ENCODE measurements at regions of chr19 and their contacts with region 1.

Region 1: DNA sequence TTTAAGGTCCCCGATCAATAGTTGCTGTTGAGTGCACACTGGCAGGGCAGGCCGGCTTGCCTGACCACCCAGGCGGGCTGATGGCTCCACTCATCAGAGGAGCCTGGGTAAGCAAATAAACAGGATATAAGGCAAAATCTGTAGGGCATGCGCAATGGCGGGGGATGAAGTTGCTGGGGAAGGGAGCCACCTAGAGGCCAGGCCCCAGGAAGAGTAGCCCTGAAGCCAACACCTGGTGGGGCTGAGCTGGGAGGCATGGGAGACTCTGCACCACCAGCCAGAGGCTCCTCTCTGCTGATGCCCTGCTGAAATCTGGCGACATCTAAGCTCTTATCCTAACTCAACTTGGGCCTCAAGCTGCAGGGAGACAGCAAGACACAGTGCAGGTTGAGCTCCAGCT is 324.3 kb downstream of the ZNF536 start:
- DNase-seq: peak; percentile 82
- ATAC-seq: peak; percentile 93
- H3K4me3 Mint-ChIP-seq: peak overlapping the region; percentile 20; the same call in 1 of the 2 replicates
- H3K27ac Mint-ChIP-seq: no peak overlapping the region; the same call in 1 of the 2 replicates
- H3K4me1 Mint-ChIP-seq: peaks cover 46% of the 10 kb centered on the region
- H3K27me3 Mint-ChIP-seq: no peaks in the 10 kb centered on the region
- CTCF ChIP-seq: no peak

Region 2: GRCh38 chr19:30325676-30326392 is 370.7 kb before region 1 on chr19:
- CTCF ChIA-PET with region 1: no interaction called
- POLR2A ChIA-PET with region 1: no interaction called
- DNase-seq: no peak
- ATAC-seq: no peak
- H3K4me3 Mint-ChIP-seq: no peak overlapping the region
- H3K27ac Mint-ChIP-seq: no peak overlapping the region
- H3K4me1 Mint-ChIP-seq: peaks cover 3% of the 10 kb centered on the region
- H3K27me3 Mint-ChIP-seq: no peaks in the 10 kb centered on the region
- CTCF ChIP-seq: no peak

Region 3: DNA sequence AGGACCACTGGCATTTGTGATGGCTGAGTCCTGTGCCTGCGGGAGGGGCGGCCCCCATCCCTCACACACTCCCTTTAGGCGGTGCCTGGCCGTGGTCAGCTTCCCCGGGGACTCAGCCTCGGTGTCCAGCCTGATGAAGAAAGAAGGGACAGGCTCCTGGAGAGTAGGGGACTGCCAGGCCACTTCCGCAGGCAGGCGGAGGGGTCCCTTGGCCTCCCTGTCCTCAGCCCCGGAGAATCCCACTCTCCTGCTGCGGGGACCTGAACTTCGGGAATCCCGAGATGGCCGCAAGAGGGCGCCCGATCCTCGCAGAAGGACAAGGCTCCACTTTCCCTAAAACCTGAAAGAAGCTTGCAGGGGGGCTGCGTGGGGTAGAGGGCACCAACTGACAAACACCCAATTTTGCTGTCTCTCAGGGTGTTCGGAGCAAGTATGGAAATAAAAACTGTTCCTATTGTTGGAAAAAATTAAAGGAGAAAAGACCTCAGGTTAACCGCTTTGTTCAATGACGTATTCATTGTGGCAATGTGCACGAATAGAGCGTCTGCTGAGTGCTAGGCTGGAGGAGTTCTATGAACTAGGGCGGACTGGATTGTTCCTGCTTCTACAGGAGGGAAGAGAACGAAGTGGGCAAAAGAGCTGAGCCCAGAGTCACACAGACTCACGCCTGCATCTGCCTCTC is 27.0 kb before region 1 on chr19:
- CTCF ChIA-PET with region 1: interaction called, 12 read pairs
- POLR2A ChIA-PET with region 1: no interaction called
- DNase-seq: peak; percentile 86
- ATAC-seq: peak; percentile 55
- H3K4me3 Mint-ChIP-seq: peak overlapping the region; percentile 52
- H3K27ac Mint-ChIP-seq: no peak overlapping the region
- H3K4me1 Mint-ChIP-seq: peaks cover 14% of the 10 kb centered on the region
- H3K27me3 Mint-ChIP-seq: no peaks in the 10 kb centered on the region; the same call in 1 of the 2 replicates
- CTCF ChIP-seq: peak; percentile 77

Region 4: DNA sequence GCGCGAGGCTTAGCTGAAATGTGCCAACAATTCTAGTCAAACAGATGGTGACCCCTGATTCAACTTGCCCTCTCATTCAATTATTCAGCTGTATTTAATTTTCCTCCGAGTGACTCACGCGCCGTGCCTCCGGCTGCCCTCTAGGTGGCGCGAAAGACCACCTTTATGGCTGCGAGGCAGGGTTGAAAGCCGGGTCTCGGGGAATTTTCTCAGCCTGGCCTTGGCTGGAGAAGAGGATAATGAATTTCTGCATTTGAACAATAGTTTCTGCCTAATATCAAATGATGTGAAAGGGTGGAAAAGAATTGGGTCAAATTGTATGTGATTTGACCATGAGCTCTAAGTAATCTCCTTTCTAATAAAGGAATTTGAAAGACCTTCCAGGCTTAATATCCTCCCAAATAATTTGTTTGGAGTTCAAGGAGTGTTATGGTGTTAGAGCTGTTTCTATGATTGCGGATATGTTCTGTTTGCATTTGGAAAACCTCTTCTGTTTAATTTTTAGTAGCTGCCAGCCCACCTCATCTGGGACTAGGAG is 13.4 kb before region 1 on chr19:
- CTCF ChIA-PET with region 1: interaction called, 77 read pairs
- POLR2A ChIA-PET with region 1: no interaction called
- DNase-seq: peak; percentile 78
- ATAC-seq: peak; percentile 58
- H3K4me3 Mint-ChIP-seq: no peak overlapping the region
- H3K27ac Mint-ChIP-seq: no peak overlapping the region
- H3K4me1 Mint-ChIP-seq: peaks cover 35% of the 10 kb centered on the region
- H3K27me3 Mint-ChIP-seq: no peaks in the 10 kb centered on the region
- CTCF ChIP-seq: peak; percentile 80

Region 5: DNA sequence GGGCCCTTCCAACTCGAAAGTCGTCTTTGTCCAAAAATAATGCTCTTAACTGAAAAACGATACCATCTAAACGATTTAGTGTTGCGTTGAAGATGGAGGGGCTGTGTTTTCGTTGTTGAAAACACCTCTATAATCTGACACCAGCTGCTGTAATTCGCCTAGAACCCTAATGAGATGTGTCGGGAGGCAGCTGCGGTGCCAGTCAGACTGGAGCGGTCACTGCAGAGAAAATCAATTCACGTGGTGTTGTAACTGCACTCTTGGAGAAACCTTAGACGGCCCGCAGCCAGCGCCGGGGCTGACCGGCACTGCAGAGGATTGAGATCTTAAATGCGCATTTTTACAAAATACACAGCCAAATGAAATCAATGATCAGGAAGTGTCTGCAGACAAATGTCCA is 14.8 kb after region 1 on chr19:
- CTCF ChIA-PET with region 1: interaction called, 14 read pairs
- POLR2A ChIA-PET with region 1: no interaction called
- DNase-seq: no peak
- ATAC-seq: peak; percentile 61
- H3K4me3 Mint-ChIP-seq: peak overlapping the region; percentile 36
- H3K27ac Mint-ChIP-seq: peak overlapping the region; percentile 58
- H3K4me1 Mint-ChIP-seq: peaks cover 24% of the 10 kb centered on the region
- H3K27me3 Mint-ChIP-seq: no peaks in the 10 kb centered on the region
- CTCF ChIP-seq: no peak

Region 6: GRCh38 chr19:30719189-30719998 is 22.9 kb after region 1 on chr19:
- CTCF ChIA-PET with region 1: interaction called, 14 read pairs
- POLR2A ChIA-PET with region 1: no interaction called
- DNase-seq: peak; percentile 48
- ATAC-seq: peak; percentile 84
- H3K4me3 Mint-ChIP-seq: peak overlapping the region; percentile 68
- H3K27ac Mint-ChIP-seq: no peak overlapping the region
- H3K4me1 Mint-ChIP-seq: peaks cover 29% of the 10 kb centered on the region
- H3K27me3 Mint-ChIP-seq: peaks cover 16% of the 10 kb centered on the region
- CTCF ChIP-seq: no peak

Region 7: DNA sequence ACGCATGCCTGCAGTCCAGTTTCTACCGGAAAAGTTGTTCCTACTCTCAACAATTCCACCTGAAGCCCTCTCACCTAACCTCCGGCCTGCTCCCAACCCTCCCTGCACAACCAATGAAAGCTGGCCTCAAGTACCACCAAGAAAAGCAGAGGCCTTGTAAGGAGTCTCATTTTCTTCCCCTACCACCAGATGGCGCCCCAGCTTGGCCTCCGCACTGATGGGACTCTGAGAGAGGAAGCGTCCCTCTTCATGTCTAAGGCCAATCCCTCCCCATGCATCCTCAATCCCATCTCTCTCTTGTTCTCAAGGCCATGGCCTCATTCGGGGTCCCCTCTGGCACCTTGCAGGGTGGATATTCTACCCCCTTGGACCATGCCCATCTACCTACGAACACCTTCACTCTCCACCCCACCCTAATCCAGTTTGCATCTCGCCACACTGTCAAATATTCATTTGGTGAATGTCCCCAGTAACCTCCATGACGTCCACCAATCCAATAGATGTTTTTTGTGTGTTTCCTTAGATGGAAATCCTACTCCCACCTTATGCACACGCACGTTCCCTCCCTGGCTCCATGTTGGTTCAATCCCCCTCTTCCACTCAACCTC is 88.4 kb after region 1 on chr19:
- CTCF ChIA-PET with region 1: interaction called, 13 read pairs
- POLR2A ChIA-PET with region 1: no interaction called
- DNase-seq: peak; percentile 84
- ATAC-seq: peak; percentile 97
- H3K4me3 Mint-ChIP-seq: no peak overlapping the region
- H3K27ac Mint-ChIP-seq: no peak overlapping the region
- H3K4me1 Mint-ChIP-seq: no peaks in the 10 kb centered on the region
- H3K27me3 Mint-ChIP-seq: no peaks in the 10 kb centered on the region; the same call in 1 of the 2 replicates
- CTCF ChIP-seq: peak; percentile 63

Measured in WTC11 (cell line).